HCT116 (cell line): ENCODE measurements at regions of chr12 and their contacts with region 1.

Region 1: DNA sequence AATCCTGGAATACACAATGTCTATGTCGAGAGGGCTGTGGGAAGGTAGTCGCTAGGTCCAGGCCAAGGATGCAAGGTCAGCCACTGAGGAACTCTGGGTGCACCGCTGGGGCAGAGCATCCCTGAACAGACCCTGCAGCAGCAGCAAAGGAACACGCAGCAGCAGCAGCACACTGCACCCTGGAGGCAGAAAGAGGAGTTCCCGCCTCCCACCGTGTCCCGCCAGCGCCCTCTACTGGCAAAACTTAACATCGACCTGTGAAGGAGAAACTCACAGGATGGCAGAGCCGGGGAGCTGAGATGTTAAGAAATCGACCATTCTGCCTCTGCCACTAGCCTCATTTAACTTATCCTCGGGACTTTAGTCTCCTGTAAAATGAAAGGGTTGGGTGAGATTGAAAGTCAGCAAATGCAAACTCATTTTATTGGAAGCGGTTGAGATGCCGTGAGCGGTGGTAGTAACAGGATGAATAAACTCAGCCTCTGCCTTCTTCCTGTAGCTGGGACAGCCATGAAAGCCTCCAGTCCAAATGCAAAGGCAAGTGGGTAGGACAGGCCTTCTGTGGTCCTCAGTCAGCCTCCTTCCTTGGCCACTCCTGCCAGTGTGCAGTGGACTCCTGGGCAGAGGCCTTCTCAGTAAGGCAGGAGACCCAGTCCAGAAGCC is 45.6 kb downstream of the STAB2 start:
- DNase-seq: peak; percentile 57
- ATAC-seq: peak; percentile 94
- H3K4me3 ChIP-seq: no peak overlapping the region
- H3K27ac ChIP-seq: no peak overlapping the region
- H3K4me1 ChIP-seq: peaks cover 0 to 4% of the 10 kb centered on the region in 2 experiments; a peak in 1 of 4 replicates
- H3K27me3 ChIP-seq: no peaks in the 10 kb centered on the region
- CTCF ChIP-seq: peak; percentile 100
- POLR2A ChIP-seq: no peak
- RAD21 ChIP-seq: peak; percentile 91

Region 2: GRCh38 chr12:103495479-103496456 is 136.9 kb before region 1 on chr12 and contains the start of gene C12orf42:
- CTCF ChIA-PET with region 1: interaction called, 4 read pairs
- POLR2A ChIA-PET with region 1: no interaction called
- RAD21 ChIA-PET with region 1: no interaction called
- intact Hi-C with region 1: loop called (anchors 5 kb)
- DNase-seq: peak; percentile 12
- ATAC-seq: peak; percentile 76
- H3K4me3 ChIP-seq: no peak within 1 kb of the TSS
- H3K27ac ChIP-seq: no peak within 1 kb of the TSS
- H3K4me1 ChIP-seq: no peaks in the 10 kb centered on the region
- H3K27me3 ChIP-seq: 0 out of 2 replicates have a peak, but pooled peaks cover 4% of the 10 kb centered on the region
- CTCF ChIP-seq: peak; percentile 56 to 63 (median 57); a peak in 5 of 6 replicates
- POLR2A ChIP-seq: no peak
- RAD21 ChIP-seq: peak; percentile 60
- total RNA-seq, gene C12orf42: not detected

Region 3: GRCh38 chr12:103586132-103586531 is 46.6 kb before region 1 on chr12:
- CTCF ChIA-PET with region 1: interaction called, 21 read pairs
- POLR2A ChIA-PET with region 1: no interaction called
- RAD21 ChIA-PET with region 1: no interaction called
- intact Hi-C with region 1: no loop called
- DNase-seq: no peak
- ATAC-seq: no peak; the same call in 1 of the 2 replicates
- H3K4me3 ChIP-seq: no peak overlapping the region
- H3K27ac ChIP-seq: no peak overlapping the region
- H3K4me1 ChIP-seq: no peaks in the 10 kb centered on the region
- H3K27me3 ChIP-seq: no peaks in the 10 kb centered on the region
- CTCF ChIP-seq: peak in 2 of 3 experiments; percentile 20 to 44; a peak in 2 of 6 replicates
- POLR2A ChIP-seq: no peak
- RAD21 ChIP-seq: peak; percentile 39

Region 4: GRCh38 chr12:103657331-103657730 is 24.6 kb after region 1 on chr12:
- CTCF ChIA-PET with region 1: interaction called, 10 read pairs
- POLR2A ChIA-PET with region 1: no interaction called
- RAD21 ChIA-PET with region 1: no interaction called
- intact Hi-C with region 1: no loop called
- DNase-seq: no peak
- ATAC-seq: no peak
- H3K4me3 ChIP-seq: no peak overlapping the region
- H3K27ac ChIP-seq: no peak overlapping the region
- H3K4me1 ChIP-seq: no peaks in the 10 kb centered on the region
- H3K27me3 ChIP-seq: peaks cover 51% of the 10 kb centered on the region
- CTCF ChIP-seq: no peak
- POLR2A ChIP-seq: no peak
- RAD21 ChIP-seq: no peak

Region 5: GRCh38 chr12:103877934-103878510 is 245.3 kb after region 1 on chr12:
- CTCF ChIA-PET with region 1: no interaction called
- POLR2A ChIA-PET with region 1: no interaction called
- RAD21 ChIA-PET with region 1: no interaction called
- intact Hi-C with region 1: loop called (anchors 5 kb)
- DNase-seq: peak; percentile 64
- ATAC-seq: peak; percentile 99
- H3K4me3 ChIP-seq: no peak overlapping the region
- H3K27ac ChIP-seq: no peak overlapping the region
- H3K4me1 ChIP-seq: peaks cover 0 to 4% of the 10 kb centered on the region in 2 experiments; a peak in 1 of 4 replicates
- H3K27me3 ChIP-seq: no peaks in the 10 kb centered on the region
- CTCF ChIP-seq: peak; percentile 71 to 87 (median 79)
- POLR2A ChIP-seq: no peak
- RAD21 ChIP-seq: peak; percentile 92